ENCODE measurements at regions of chr6 and their contacts with region 1.

Region 1: DNA sequence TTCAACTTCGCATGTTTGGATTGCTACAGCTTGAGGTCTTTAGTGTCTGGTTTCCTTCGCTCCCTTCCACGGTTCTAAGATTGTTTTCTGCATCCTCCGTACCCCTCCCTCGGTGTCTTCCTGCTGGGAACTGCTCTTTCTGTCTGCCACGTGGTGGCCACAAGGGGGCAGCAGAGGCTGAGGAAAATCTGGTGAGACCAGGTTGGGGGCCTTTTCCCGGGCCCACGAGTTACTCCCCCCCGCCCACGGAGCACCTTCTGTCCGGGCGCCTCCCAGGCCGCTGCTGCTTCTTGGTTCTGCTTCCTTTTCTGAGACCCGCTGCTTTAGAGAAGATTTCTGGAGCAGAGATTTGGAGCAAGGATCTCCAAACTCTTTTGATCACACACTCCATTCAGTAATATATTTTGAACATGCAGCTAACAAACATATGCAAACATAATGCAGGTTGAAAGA is 21.1 kb upstream of the NOTCH4 start:
- DNase-seq: peak; percentile 87 to 93 (median 93)
- ATAC-seq: peak; percentile 87 to 88
- H3K4me3 ChIP-seq: no peak overlapping the region
- H3K27ac ChIP-seq: peak overlapping the region; percentile 62
- H3K4me1 ChIP-seq: no peaks in the 10 kb centered on the region
- H3K27me3 ChIP-seq: no peaks in the 10 kb centered on the region

Region 2: DNA sequence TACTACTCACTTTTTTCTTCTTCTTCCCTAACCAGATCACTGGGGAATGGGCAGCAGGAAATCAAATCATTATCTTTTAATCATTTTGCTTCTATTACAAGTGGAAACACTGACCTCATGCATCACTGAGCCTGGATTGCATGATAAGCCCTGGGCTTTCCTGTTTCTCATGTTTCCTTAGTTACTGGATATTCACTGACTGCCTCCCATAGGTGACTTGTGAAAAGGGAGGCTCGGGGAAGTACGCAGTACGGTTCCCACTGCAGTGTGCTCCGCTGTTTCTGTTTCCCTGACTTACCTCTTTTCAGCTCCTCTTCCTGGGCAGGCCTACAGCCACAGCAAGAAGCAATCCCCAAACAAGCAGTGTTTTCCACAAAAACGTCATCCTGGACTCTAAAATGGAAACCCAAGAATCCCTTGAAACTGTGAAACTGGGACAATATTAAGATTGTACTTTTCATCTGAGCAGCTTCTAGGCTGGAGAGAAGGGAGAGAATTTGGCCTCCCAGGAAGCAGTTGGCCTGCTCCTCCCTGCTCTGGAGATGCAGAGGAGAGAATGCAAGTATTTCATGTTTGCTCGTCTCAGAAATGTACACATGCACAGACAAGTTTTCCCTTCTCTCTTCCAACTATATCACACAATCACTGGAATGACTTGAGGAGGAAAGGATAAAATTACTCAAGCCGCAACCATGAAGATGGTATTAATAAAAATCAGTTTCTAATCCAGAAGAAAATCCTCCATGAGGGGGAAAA is 148.9 kb after region 1 on chr6:
- intact Hi-C with region 1: loop called in 1 of 4 experiments (anchors 5 kb)
- DNase-seq: peak; percentile 19 to 55 (median 47)
- ATAC-seq: peak; percentile 86 to 98
- H3K4me3 ChIP-seq: no peak overlapping the region
- H3K27ac ChIP-seq: peak overlapping the region; percentile 88
- H3K4me1 ChIP-seq: no peaks in the 10 kb centered on the region
- H3K27me3 ChIP-seq: no peaks in the 10 kb centered on the region